ENCODE measurements at regions of chr3 and their contacts with region 1.

Region 1: GRCh38 chr3:24773798-24774197 is 279.1 kb upstream of the THRB start:
- DNase-seq: no peak

Region 2: GRCh38 chr3:24359645-24360462 is 413.9 kb before region 1 on chr3:
- intact Hi-C with region 1: no loop called
- DNase-seq: no peak

Region 3: DNA sequence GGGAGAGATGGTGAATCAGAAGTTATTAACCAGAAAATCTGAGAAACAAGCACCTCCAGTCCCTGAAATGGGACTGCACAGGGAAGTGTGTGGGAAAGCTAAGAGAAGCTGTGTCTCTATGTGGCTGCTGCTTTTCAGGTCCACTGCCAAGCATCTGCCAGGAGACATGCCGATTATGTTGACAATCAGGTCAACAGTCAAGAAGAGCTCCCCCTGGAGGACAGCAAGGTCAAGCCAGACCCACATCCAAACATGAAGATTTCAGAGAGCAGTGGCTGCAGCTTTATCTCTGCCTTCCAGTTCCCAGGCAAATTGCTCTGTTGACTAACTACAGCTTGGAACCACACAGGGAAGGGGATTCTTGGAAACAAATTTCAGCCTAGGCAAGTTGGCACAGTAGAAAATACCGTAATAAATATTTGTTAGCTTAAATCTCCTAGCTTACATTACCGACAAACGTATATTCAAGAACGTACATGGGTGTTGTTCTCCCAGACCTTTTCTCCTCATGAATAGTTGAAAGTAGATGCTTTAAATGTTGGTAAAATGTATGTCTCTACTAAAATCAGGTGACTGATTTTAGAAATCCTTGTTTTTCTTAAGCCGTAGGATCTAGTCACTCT is 259.7 kb after region 1 on chr3:
- intact Hi-C with region 1: loop called (anchors 10 kb)
- DNase-seq: no peak

Region 4: DNA sequence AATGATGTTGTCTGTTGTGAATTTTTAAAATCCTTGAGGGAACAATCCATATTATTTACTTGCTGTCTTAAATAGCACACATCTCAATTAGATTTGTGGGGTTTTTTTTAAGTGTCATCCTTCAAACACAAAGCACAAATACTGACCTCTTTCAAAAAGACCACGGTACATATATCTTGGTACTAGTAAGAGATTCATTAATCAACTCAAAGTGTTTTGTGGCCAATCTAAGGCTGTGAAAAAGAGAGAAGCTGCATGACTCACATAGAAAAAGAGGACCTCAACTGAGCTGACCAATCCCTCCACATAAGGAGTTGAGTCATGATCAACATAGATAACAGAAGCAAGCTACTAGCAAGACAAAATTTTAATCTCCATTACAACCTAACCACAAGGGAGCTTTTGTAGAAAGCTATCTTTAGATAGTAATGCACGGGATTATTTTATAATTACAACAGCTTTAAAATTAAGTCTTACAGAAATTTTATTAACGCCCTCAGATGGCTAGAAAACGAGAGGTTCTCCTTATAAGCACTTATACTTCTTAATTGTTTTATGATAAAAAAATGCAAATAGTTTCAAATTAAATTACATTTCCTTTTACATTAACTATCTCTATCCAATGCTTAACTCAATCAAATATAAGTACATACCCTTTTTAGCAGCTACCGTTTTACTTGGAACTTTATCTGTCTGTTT is 830.5 kb after region 1 on chr3:
- intact Hi-C with region 1: loop called (anchors 5 kb)
- DNase-seq: no peak